GM12878 (cell line): ENCODE measurements at regions of chr17 and their contacts with region 1.

Region 1: GRCh38 chr17:28612936-28613872 is 781 bp downstream of the RSKR start:
- DNase-seq: no peak
- ATAC-seq: peak; percentile 87
- H3K4me3 ChIP-seq: no peak overlapping the region
- H3K27ac ChIP-seq: no peak overlapping the region; the same call in 1 of the 2 replicates
- H3K4me1 ChIP-seq: no peaks in the 10 kb centered on the region; the same call in none of the 2 replicates
- H3K27me3 ChIP-seq: no peaks in the 10 kb centered on the region
- CTCF ChIP-seq: peak; percentile 62 to 75 (median 69)
- EP300 ChIP-seq: no peak
- POLR2A ChIP-seq: 0 out of 2 replicates have a peak, but pooled peaks have one; percentile 5
- RAD21 ChIP-seq: peak; percentile 69

Region 2: GRCh38 chr17:28598799-28599310 is 14.3 kb before region 1 on chr17 and contains the start of gene SPAG5:
- CTCF ChIA-PET with region 1: interaction called, 9 read pairs
- POLR2A ChIA-PET with region 1: interaction called, 12 read pairs
- RAD21 ChIA-PET with region 1: interaction called, 7 read pairs
- SMC1A ChIA-PET with region 1: interaction called, 3 read pairs
- in situ Hi-C with region 1: no loop called
- intact Hi-C with region 1: no loop called
- DNase-seq: peak; percentile 80
- ATAC-seq: peak; percentile 95
- H3K4me3 ChIP-seq: peak within 1 kb of the TSS; percentile 98
- H3K27ac ChIP-seq: peak within 1 kb of the TSS; percentile 94
- H3K4me1 ChIP-seq: peaks cover 5% of the 10 kb centered on the region
- H3K27me3 ChIP-seq: no peaks in the 10 kb centered on the region
- CTCF ChIP-seq: no peak
- EP300 ChIP-seq: no peak
- POLR2A ChIP-seq: peak; percentile 95
- RAD21 ChIP-seq: no peak
- polyA plus RNA-seq, gene SPAG5: 73.5 to 139 TPM

Region 3: GRCh38 chr17:28623696-28624095 is 10.5 kb after region 1 on chr17:
- CTCF ChIA-PET with region 1: interaction called, 20 read pairs
- POLR2A ChIA-PET with region 1: interaction called, 11 read pairs
- RAD21 ChIA-PET with region 1: no interaction called
- SMC1A ChIA-PET with region 1: interaction called, 5 read pairs
- in situ Hi-C with region 1: no loop called
- intact Hi-C with region 1: no loop called
- DNase-seq: no peak
- ATAC-seq: no peak
- H3K4me3 ChIP-seq: no peak overlapping the region
- H3K27ac ChIP-seq: no peak overlapping the region
- H3K4me1 ChIP-seq: no peaks in the 10 kb centered on the region
- H3K27me3 ChIP-seq: no peaks in the 10 kb centered on the region
- CTCF ChIP-seq: no peak
- EP300 ChIP-seq: no peak
- POLR2A ChIP-seq: no peak
- RAD21 ChIP-seq: no peak